ENCODE measurements at regions of chr3 and their contacts with region 1.

Region 1: GRCh38 chr3:122609798-122610559 is 32.5 kb downstream of the PARP15 start:
- DNase-seq: peak; percentile 98
- ATAC-seq: peak; percentile 96
- H3K4me3 ChIP-seq: no peak overlapping the region
- H3K27ac ChIP-seq: peak overlapping the region; percentile 75
- H3K4me1 ChIP-seq: peaks cover 22% of the 10 kb centered on the region
- H3K27me3 ChIP-seq: no peaks in the 10 kb centered on the region
- CTCF ChIP-seq: no peak
- EP300 ChIP-seq: peak; percentile 91 to 99
- POLR2A ChIP-seq: no peak
- RAD21 ChIP-seq: no peak; the same call in 1 of the 2 replicates

Region 2: GRCh38 chr3:122578069-122578740 is 31.8 kb before region 1 on chr3:
- CTCF ChIA-PET with region 1: interaction called, 6 read pairs
- POLR2A ChIA-PET with region 1: interaction called, 4 read pairs
- RAD21 ChIA-PET with region 1: interaction called, 16 read pairs
- SMC1A ChIA-PET with region 1: interaction called, 11 read pairs
- in situ Hi-C with region 1: no loop called
- intact Hi-C with region 1: loop called (anchors 1 kb)
- DNase-seq: no peak
- ATAC-seq: no peak
- H3K4me3 ChIP-seq: peak overlapping the region; percentile 54
- H3K27ac ChIP-seq: peak overlapping the region; percentile 95
- H3K4me1 ChIP-seq: peaks cover 24% of the 10 kb centered on the region
- H3K27me3 ChIP-seq: no peaks in the 10 kb centered on the region
- CTCF ChIP-seq: no peak
- EP300 ChIP-seq: no peak
- POLR2A ChIP-seq: no peak
- RAD21 ChIP-seq: no peak

Region 3: DNA sequence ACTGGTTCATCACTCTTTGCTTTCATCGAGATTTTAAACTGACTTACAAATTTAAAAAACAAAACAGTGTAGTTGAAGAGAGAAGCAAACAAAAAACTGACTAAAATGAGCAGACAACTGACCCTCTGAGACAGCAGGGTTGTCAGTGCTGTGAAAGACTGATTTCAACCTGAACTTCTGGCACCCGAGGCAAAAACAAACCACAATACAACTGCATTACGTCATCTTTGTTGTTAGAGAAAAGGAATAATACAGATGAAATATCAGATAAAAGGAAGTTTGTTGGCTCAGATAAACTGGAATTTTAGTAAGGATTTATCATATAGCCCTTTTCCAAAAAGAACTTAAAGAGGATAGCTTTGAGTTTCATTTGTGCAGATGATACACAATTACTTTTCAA is 18.6 kb after region 1 on chr3:
- CTCF ChIA-PET with region 1: interaction called, 5 read pairs
- POLR2A ChIA-PET with region 1: interaction called, 4 read pairs
- RAD21 ChIA-PET with region 1: interaction called, 6 read pairs
- SMC1A ChIA-PET with region 1: interaction called, 7 read pairs
- in situ Hi-C with region 1: no loop called
- intact Hi-C with region 1: loop called (anchors 2 kb)
- DNase-seq: no peak
- ATAC-seq: no peak
- H3K4me3 ChIP-seq: no peak overlapping the region
- H3K27ac ChIP-seq: no peak overlapping the region
- H3K4me1 ChIP-seq: peaks cover 14% of the 10 kb centered on the region
- H3K27me3 ChIP-seq: no peaks in the 10 kb centered on the region
- CTCF ChIP-seq: no peak
- EP300 ChIP-seq: no peak
- POLR2A ChIP-seq: no peak
- RAD21 ChIP-seq: no peak